ENCODE measurements at regions of chr11 and their contacts with region 1.

Region 1: GRCh38 chr11:74278721-74279161 is 32.7 kb downstream of the P4HA3 start:
- DNase-seq: peak; percentile 93
- ATAC-seq: peak; percentile 79
- H3K4me3 ChIP-seq: no peak overlapping the region
- H3K27ac ChIP-seq: peak overlapping the region; percentile 86
- H3K4me1 ChIP-seq: peaks cover 36% of the 10 kb centered on the region
- H3K27me3 ChIP-seq: no peaks in the 10 kb centered on the region
- CTCF ChIP-seq: no peak

Region 2: DNA sequence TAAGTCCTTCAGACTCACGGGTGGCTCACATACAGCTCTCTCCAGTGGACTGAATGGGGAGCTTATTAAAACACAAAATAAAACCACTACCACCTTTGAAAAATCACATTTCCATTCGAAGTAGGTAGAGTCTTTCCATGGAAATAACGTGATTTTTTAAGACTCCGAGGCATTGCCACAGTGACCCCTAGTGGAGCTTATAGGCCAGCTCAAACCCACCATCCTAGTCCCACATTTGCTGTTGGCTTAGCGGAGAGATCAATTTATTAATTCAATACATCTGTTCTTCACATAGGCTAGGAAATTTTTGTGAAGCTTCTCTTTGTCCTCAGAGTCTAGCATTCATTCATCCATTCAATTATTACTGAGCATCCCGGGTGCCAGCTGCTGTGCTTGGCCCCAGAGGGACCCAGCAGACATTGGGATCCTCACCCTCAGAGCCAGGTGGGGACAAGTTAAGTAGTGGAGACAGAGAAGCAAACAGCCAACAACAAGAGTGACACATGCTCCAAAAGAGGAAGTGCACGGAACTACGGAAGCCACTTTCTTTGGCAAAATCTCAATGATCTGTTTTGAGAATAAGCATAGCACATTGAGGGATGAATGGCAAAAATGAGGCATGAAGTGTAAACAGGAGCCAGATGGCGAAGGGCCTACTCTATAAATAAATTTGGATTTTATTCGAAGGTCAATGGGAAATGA is 42.9 kb after region 1 on chr11:
- CTCF ChIA-PET with region 1: no interaction called
- POLR2A ChIA-PET with region 1: no interaction called
- intact Hi-C with region 1: loop called (anchors 5 kb)
- DNase-seq: peak; percentile 77
- ATAC-seq: peak; percentile 60
- H3K4me3 ChIP-seq: no peak overlapping the region; the same call in 1 of the 2 replicates
- H3K27ac ChIP-seq: peak overlapping the region; percentile 56
- H3K4me1 ChIP-seq: peaks cover 33% of the 10 kb centered on the region
- H3K27me3 ChIP-seq: no peaks in the 10 kb centered on the region
- CTCF ChIP-seq: peak; percentile 92

Measured in PC-3 (cell line).